ENCODE measurements at regions of chr10 and their contacts with region 1.

Region 1: DNA sequence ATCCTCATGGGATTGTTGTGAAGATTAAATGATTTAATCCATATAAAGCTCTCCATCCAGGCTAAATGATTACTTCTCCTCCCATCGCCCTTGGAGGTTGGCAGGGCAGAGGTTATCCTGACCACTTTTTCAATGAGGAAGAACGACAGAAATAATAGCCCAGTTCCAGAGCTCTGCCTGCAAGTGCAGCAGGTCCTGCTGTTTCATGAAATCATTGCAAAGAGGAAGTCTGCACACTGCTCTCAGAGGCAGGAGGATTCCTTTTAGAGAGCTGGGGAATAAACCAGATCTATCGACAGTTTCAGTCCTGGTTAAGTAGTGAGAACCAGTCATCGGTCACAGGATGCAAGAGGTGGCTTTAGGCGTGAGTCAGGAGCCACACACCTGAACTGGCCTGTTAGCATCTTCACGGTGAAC is 25.0 kb upstream of the CDH23 start:
- DNase-seq: peak; percentile 62 to 77 (median 69)
- H3K4me3 ChIP-seq: peak overlapping the region in 2 of 3 experiments; percentile 4 to 64
- H3K4me3 Mint-ChIP-seq: peak overlapping the region; percentile 31 to 77
- H3K27ac ChIP-seq: peak overlapping the region; percentile 83 to 89
- H3K27ac Mint-ChIP-seq: peak overlapping the region; percentile 85 to 95 (median 93)
- H3K4me1 ChIP-seq: peaks cover 88 to 90% of the 10 kb centered on the region in 2 donors
- H3K4me1 Mint-ChIP-seq: peaks cover 82% of the 10 kb centered on the region
- H3K27me3 ChIP-seq: no peaks in the 10 kb centered on the region
- H3K27me3 Mint-ChIP-seq: no peaks in the 10 kb centered on the region
- CTCF ChIP-seq: no peak

Region 2: DNA sequence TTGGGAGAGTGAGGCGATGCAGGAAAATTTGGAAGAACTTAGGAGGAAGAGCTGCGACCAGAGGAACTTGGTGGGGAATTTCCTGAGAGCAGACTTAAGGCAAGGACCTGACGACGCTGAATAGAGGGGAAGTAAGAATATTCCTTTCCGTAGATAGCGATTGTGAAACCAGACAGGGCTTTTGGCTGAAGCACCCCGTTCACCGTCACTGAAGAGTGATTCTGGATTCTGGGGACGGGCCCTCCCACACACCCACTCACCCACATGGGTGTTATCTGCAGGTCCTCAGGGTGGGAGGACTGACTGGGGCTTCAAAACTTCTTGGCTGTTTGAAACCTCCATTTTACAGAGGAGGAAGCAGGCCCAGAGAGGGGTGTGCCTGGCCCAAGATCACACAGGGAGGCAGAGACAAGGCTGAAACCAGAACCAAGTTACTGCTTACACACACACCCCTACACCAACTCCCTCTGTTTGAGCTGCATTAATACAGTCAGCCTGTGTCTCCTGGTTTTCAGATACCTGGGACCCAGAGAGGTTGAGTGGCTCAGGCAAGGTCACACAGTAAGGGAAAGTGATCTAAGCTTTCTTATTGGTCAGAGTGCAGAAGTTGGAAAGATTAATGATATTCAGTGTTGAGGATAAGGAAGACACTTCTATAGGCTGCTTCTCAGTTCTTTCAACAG is 12.3 kb before region 1 on chr10:
- intact Hi-C with region 1: loop called in 1 of 2 experiments (anchors 2 kb)
- DNase-seq: peak; percentile 70 to 92 (median 88)
- H3K4me3 ChIP-seq: peak overlapping the region in 1 of 3 experiments; percentile 63
- H3K4me3 Mint-ChIP-seq: peak overlapping the region; percentile 66 to 85
- H3K27ac ChIP-seq: peak overlapping the region; percentile 75 to 90
- H3K27ac Mint-ChIP-seq: peak overlapping the region; percentile 92 to 98 (median 97)
- H3K4me1 ChIP-seq: peaks cover 53 to 56% of the 10 kb centered on the region in 2 donors
- H3K4me1 Mint-ChIP-seq: peaks cover 48% of the 10 kb centered on the region
- H3K27me3 ChIP-seq: no peaks in the 10 kb centered on the region
- H3K27me3 Mint-ChIP-seq: peaks cover 0 to 2% (median 1%) of the 10 kb centered on the region in 3 donors
- CTCF ChIP-seq: no peak

Region 3: GRCh38 chr10:71396084-71396720 is 24.4 kb after region 1 on chr10:
- intact Hi-C with region 1: no loop called
- DNase-seq: no peak
- H3K4me3 ChIP-seq: peak overlapping the region in 2 of 3 experiments; percentile 1 to 64
- H3K4me3 Mint-ChIP-seq: peak overlapping the region; percentile 61 to 63
- H3K27ac ChIP-seq: no peak overlapping the region
- H3K27ac Mint-ChIP-seq: no peak overlapping the region
- H3K4me1 ChIP-seq: peaks cover 10 to 22% of the 10 kb centered on the region in 2 donors
- H3K4me1 Mint-ChIP-seq: peaks cover 16% of the 10 kb centered on the region
- H3K27me3 ChIP-seq: peaks cover 38 to 51% of the 10 kb centered on the region in 2 donors
- H3K27me3 Mint-ChIP-seq: peaks cover 52 to 65% (median 53%) of the 10 kb centered on the region in 3 donors
- CTCF ChIP-seq: no peak

Region 4: DNA sequence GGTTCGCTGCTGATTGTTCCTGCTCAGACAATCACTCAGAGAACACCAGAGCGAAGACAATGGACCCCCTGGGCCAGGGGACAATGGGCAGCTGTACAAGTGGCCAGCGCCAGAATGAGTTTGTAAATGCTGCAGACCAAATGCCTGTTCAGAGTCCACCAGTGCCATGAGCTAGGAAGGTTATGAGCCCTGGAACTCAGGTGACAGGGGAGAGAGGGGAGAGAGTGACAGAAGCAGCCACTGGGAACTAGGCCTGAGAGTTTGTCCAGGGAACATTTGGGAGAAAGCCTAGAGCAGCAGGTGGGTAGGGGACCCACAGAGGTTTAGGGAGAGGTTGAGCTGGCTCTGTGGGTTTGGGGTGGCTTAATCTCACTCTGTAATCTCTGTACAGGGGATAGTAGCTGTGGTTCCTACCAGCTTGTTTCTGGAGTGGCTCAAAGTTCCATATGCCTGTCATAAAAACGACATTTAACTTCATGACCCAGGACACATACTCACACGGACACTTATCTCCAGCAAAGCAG is 287.4 kb after region 1 on chr10:
- intact Hi-C with region 1: no loop called
- DNase-seq: no peak
- H3K4me3 ChIP-seq: no peak overlapping the region
- H3K4me3 Mint-ChIP-seq: no peak overlapping the region
- H3K27ac ChIP-seq: no peak overlapping the region
- H3K27ac Mint-ChIP-seq: no peak overlapping the region
- H3K4me1 ChIP-seq: peaks cover 5 to 9% of the 10 kb centered on the region in 2 donors
- H3K4me1 Mint-ChIP-seq: peaks cover 13% of the 10 kb centered on the region
- H3K27me3 ChIP-seq: no peaks in the 10 kb centered on the region
- H3K27me3 Mint-ChIP-seq: peaks cover 6 to 10% (median 9%) of the 10 kb centered on the region in 3 donors
- CTCF ChIP-seq: no peak